ENCODE measurements at regions of chr6 and their contacts with region 1.

Region 1: GRCh38 chr6:111764238-111765175 is 108.7 kb downstream of the FYN start:
- DNase-seq: peak; percentile 67
- H3K4me3 Mint-ChIP-seq: peak overlapping the region; percentile 57
- H3K27ac Mint-ChIP-seq: peak overlapping the region; percentile 95
- H3K4me1 Mint-ChIP-seq: peaks cover 99% of the 10 kb centered on the region
- H3K27me3 Mint-ChIP-seq: no peaks in the 10 kb centered on the region

Region 2: DNA sequence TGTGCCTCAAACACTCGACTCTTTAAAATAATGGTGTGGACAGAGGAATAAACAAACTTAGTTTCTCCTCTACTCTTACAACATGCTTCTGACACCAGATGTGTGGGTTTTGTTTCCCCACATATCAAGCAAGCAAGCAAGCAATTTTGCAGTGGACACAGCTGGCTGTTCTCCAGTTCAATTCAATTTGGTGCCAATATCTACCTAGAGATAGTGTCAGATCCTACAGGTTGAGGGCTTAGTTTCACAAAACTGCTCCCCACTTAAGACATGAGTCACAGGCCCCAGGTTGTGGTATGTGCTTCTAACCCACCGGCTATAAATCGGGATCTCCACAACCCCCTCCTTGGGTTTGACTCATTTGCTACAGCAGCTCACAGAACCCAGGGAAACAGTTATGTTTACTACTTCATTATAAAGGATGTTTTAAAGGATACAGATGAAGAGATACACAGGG is 27.4 kb before region 1 on chr6:
- CTCF ChIA-PET with region 1: interaction called, 3 read pairs
- POLR2A ChIA-PET with region 1: interaction called, 11 read pairs
- DNase-seq: no peak
- H3K4me3 Mint-ChIP-seq: no peak overlapping the region
- H3K27ac Mint-ChIP-seq: peak overlapping the region; percentile 42
- H3K4me1 Mint-ChIP-seq: peaks cover 83% of the 10 kb centered on the region
- H3K27me3 Mint-ChIP-seq: no peaks in the 10 kb centered on the region

Region 3: DNA sequence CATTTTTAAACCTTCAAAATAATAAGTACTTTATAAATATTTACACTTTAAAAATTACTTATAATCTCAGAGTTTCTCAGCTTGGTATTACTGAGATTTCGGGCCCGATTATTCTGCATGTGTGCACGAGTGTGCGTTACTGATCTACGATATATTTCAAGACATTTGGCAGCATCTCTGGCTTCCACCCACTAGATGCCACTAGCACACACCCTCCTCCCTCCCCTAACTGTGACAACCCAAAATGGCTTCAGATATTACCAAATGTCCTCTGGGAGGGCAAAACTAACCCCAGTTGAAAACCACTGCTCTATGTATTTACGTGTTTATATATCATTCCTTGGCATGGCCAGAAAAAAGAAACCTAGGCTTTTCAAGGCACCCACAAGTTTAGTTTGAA is 12.8 kb after region 1 on chr6:
- CTCF ChIA-PET with region 1: interaction called, 52 read pairs
- POLR2A ChIA-PET with region 1: interaction called, 92 read pairs
- DNase-seq: no peak
- H3K4me3 Mint-ChIP-seq: no peak overlapping the region
- H3K27ac Mint-ChIP-seq: peak overlapping the region; percentile 66
- H3K4me1 Mint-ChIP-seq: peaks cover 86% of the 10 kb centered on the region
- H3K27me3 Mint-ChIP-seq: no peaks in the 10 kb centered on the region

Region 4: DNA sequence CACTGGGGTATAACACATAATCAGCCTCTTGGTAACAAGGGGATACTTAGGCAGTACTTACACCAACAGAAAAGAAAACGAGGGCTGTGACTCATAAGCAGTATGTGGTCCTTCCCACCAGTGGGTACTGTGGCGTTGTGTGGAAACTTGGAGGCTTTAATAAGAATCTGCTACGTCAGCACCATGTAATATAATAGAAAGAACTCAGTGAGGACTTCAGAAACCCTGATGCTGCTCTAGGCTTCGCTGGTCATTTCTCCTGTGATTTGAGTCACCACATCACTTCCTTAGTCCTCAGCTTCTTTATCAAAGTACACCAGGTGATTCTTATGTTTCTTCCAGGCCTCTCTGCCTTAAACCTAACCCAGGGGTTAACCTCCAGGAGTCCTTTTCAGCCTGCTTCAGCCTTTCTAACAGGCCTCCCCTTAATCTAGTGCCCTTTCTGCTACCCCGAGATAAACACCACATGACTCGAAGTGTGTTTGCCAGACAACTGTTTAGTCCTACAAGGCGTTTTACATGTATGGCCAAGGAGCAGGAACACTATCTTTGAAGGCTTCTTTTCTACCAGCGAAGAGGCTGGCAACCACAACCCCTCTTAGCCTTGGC is 40.2 kb after region 1 on chr6:
- CTCF ChIA-PET with region 1: no interaction called
- POLR2A ChIA-PET with region 1: interaction called, 30 read pairs
- DNase-seq: peak; percentile 83
- H3K4me3 Mint-ChIP-seq: peak overlapping the region; percentile 40
- H3K27ac Mint-ChIP-seq: peak overlapping the region; percentile 86
- H3K4me1 Mint-ChIP-seq: peaks cover 77% of the 10 kb centered on the region
- H3K27me3 Mint-ChIP-seq: no peaks in the 10 kb centered on the region

Region 5: DNA sequence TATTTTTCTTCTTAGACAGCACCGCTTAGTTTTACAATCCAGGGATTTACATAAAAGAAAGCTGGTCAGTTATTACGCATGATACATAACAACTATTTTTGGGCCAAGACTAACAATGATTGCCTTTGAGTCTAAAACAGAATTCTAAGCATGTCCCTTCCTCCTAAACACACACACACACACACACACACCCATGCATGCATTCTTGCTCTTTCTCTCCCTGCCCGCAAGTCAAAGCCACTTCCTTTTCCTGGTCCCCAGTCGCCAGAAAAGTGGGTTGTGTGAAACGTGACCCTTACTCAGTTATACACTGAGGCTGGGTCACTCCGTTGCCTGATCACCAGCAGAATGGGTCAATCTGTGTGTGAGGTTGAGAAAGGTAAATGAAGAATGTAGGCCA is 77.3 kb after region 1 on chr6:
- CTCF ChIA-PET with region 1: interaction called, 6 read pairs
- POLR2A ChIA-PET with region 1: interaction called, 22 read pairs
- DNase-seq: peak; percentile 77
- H3K4me3 Mint-ChIP-seq: no peak overlapping the region
- H3K27ac Mint-ChIP-seq: no peak overlapping the region
- H3K4me1 Mint-ChIP-seq: peaks cover 36% of the 10 kb centered on the region
- H3K27me3 Mint-ChIP-seq: no peaks in the 10 kb centered on the region